ENCODE measurements at regions of chr2 and their contacts with region 1.

Region 1: DNA sequence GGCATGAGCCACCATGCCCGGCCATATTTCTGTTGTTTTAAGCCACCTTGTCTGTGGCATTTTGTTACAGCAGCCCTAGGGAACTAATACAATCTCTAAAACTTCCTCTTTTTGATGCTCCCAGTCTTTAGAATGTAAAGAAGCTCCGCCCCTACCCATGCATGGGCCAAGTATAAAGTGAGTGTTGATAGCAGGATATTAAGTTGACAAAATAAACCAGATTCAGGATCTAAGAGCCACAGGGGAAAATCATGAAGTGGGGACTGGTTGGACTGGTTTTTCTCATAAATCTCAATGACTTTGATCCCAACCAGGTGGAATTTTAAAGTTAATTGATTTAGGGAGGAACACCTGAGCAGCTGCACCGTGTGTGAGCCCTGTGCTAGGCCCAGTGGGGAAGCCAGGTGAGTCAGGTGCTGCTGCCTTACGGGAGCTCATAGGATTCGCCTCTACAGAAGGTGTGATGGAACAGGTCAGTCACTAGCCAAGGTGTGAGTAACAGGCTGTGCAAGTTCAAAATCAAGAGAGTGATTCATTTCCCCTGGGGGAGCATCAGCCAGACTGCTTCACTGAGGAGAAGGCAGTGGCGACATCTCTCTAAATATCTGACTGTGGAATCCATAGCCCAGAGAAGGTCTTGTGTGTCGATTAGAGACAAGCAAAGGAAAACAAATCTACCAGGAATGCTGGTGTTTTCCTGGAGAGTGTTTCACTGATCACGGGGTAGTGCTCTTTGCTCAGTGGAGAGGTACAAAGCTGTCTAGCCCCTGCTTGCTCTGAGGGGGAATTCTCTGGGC is 63.0 kb upstream of the MSH2 start:
- DNase-seq: no peak
- H3K4me3 ChIP-seq: no peak overlapping the region
- H3K27ac ChIP-seq: peak overlapping the region; percentile 39 to 57 (median 49)
- H3K4me1 ChIP-seq: peaks cover 11 to 35% (median 16%) of the 10 kb centered on the region in 3 donors
- H3K27me3 ChIP-seq: no peaks in the 10 kb centered on the region
- CTCF ChIP-seq: no peak
- POLR2A ChIP-seq: no peak

Region 2: DNA sequence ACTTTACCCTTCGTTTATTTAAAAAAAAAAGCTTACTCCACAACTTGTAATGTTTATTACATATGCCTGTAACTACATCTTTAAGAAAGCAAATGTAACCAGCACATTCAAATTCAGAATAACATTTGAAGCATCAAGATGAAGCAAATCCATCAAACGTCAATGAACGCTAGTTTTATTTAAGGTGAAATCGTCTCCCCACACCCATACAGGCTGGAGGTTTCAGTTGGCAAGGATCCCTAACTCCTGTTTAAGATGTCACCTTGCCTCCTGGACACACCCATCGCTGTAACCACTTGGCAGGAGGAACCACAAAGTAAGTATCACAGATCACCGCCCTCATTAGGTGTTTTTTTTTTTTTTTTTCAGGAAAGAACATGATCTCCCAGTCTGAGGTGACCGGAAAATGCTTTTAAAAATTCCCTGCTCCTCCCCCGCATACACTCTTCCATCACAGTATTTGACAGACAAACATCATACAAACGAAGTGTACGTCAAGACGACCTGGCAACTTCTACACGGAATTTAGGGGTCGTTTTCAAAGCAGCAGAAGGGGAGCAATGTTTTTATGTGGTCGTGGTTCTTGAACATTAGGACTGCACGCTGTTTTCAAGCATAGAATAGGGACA is 165.1 kb before region 1 on chr2:
- intact Hi-C with region 1: no loop called
- DNase-seq: no peak
- H3K4me3 ChIP-seq: peak overlapping the region; percentile 70 to 98 (median 88)
- H3K27ac ChIP-seq: peak overlapping the region; percentile 96 to 100 (median 99)
- H3K4me1 ChIP-seq: peaks cover 19 to 56% (median 45%) of the 10 kb centered on the region in 3 donors
- H3K27me3 ChIP-seq: no peaks in the 10 kb centered on the region
- CTCF ChIP-seq: no peak
- POLR2A ChIP-seq: peak in 1 of 4 donors; percentile 5

Region 3: DNA sequence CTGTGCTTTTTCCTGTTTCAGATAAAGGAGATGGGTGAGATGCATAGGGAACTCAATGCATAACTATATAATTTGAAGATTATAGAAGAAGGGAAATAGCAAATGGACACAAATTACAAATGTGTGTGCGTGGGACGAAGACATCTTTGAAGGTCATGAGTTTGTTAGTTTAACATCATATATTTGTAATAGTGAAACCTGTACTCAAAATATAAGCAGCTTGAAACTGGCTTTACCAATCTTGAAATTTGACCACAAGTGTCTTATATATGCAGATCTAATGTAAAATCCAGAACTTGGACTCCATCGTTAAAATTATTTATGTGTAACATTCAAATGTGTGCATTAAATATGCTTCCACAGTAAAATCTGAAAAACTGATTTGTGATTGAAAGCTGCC is 46.6 kb after region 1 on chr2:
- intact Hi-C with region 1: loop called (anchors 5 kb)
- DNase-seq: no peak
- H3K4me3 ChIP-seq: no peak overlapping the region
- H3K27ac ChIP-seq: no peak overlapping the region
- H3K4me1 ChIP-seq: no peaks in the 10 kb centered on the region
- H3K27me3 ChIP-seq: no peaks in the 10 kb centered on the region
- CTCF ChIP-seq: no peak
- POLR2A ChIP-seq: no peak

Measured in esophagus squamous epithelium (tissue), 5 donors.